ENCODE measurements at regions of chr2 and their contacts with region 1.

Region 1: DNA sequence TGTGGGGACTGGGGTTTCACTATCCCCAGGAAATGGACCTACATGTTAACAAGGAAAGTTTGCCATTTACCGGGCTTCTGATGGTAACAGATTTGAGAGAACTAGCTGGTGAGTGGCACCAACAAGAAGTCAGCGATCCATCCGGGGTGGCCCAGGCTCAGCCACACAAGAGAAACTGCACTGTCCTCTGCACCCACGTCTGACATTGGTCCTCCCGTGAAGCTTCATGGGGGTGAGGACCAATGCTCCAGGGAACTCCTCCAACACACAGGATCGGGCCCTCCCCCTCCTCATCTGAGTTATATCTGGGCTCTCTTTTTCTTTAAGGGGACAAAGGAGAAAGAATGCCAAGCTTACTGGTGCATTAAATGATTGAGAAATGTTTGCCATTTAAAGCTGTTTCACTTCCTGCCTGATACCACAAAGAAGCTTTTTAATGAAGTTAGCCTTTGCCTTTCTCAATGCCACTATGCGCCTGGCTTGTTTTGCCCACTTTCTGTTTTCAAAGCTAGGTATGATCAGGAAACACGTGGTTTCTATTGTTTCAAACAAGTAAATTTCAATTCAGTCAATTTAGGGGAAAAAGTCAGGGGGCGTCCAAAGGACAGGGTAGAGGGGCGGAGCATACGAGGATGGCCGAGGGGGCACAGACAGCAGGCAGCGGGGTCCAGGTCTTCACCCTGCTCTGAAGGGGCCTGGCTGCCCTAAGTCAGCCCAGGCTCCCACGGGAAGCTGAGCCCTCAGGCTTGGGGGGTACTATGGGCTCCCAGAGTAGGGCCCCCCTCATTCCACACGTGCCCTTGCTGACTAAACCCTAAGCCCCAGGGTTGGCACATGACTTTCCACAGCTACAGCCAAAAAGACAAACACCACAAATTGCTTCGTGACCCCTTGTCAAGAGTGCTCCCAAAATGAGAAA is 204.0 kb upstream of the ID2 start:
- DNase-seq: peak in 5 of 14 experiments; percentile 32 to 78 (median 63)
- ATAC-seq: peak; percentile 49
- H3K4me3 ChIP-seq: peak overlapping the region; percentile 41
- H3K4me3 Mint-ChIP-seq: peak overlapping the region; percentile 49
- H3K27ac ChIP-seq: peak overlapping the region; percentile 32 to 83
- H3K27ac Mint-ChIP-seq: peak overlapping the region; percentile 80
- H3K4me1 ChIP-seq: peaks cover 87% of the 10 kb centered on the region
- H3K4me1 Mint-ChIP-seq: peaks cover 76% of the 10 kb centered on the region
- H3K27me3 ChIP-seq: no peaks in the 10 kb centered on the region
- H3K27me3 Mint-ChIP-seq: no peaks in the 10 kb centered on the region
- CTCF ChIP-seq: no peak

Region 2: GRCh38 chr2:8488001-8488738 is 10.4 kb after region 1 on chr2:
- CTCF ChIA-PET with region 1: no interaction called
- POLR2A ChIA-PET with region 1: interaction called, 18 read pairs
- intact Hi-C with region 1: no loop called
- DNase-seq: peak in 13 of 14 experiments; percentile 19 to 94 (median 45)
- ATAC-seq: peak; percentile 85
- H3K4me3 ChIP-seq: peak overlapping the region; percentile 60
- H3K4me3 Mint-ChIP-seq: peak overlapping the region; percentile 77
- H3K27ac ChIP-seq: peak overlapping the region; percentile 80
- H3K27ac Mint-ChIP-seq: peak overlapping the region; percentile 89
- H3K4me1 ChIP-seq: peaks cover 54% of the 10 kb centered on the region
- H3K4me1 Mint-ChIP-seq: peaks cover 58% of the 10 kb centered on the region
- H3K27me3 ChIP-seq: no peaks in the 10 kb centered on the region
- H3K27me3 Mint-ChIP-seq: no peaks in the 10 kb centered on the region
- CTCF ChIP-seq: no peak

Region 3: DNA sequence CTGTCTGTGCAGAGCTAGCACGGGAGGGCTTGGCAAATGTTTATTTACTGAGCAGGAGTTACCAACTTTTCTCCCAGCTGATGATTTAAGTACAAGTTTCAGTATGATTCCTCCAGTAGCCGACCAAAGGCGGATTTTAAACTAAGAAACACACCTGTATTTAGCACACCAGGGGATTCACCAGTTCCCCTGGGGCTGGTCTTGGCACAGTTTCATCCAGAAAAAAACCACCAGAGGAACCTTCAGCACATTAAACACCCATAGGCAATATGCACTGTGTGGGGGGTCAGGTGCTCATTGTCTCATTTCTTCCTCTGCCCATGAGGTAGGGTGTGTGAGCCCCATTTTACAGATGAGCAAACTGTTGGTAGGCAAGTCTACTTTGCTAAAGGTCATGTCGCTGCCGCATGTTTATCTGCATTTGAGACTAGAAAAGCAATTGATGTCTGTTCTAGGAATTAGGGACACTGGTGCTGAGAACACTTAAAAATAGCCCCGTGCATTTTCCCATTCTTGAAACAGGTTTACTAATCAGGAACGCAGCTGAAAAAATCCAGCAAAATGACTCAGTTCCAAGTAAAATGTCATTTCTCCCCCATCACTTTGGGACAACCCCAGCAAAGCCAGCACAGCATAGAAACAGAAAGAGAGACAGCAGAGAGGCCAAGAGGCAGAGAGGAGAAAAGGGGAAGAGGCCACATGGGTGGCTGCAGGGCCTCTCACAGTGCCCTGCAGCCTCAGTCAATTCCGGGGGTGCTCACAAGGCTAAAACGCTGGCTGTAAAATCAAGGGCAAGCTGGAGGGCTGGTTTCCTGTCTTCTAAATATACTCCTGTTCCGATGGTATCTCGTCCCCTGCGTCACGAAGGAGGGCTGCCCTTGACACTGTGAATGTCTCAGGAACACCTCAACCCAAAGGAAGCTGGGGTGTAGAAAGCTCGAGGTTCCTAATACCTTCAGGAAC is 37.3 kb after region 1 on chr2:
- CTCF ChIA-PET with region 1: no interaction called
- POLR2A ChIA-PET with region 1: interaction called, 5 read pairs
- intact Hi-C with region 1: loop called in 1 of 2 experiments (anchors 5 kb)
- DNase-seq: peak; percentile 12 to 88 (median 30)
- ATAC-seq: peak; percentile 85
- H3K4me3 ChIP-seq: no peak overlapping the region
- H3K4me3 Mint-ChIP-seq: peak overlapping the region; percentile 59
- H3K27ac ChIP-seq: peak overlapping the region; percentile 1 to 75
- H3K27ac Mint-ChIP-seq: peak overlapping the region; percentile 81
- H3K4me1 ChIP-seq: peaks cover 46% of the 10 kb centered on the region
- H3K4me1 Mint-ChIP-seq: peaks cover 23% of the 10 kb centered on the region
- H3K27me3 ChIP-seq: no peaks in the 10 kb centered on the region
- H3K27me3 Mint-ChIP-seq: no peaks in the 10 kb centered on the region
- CTCF ChIP-seq: no peak

Region 4: DNA sequence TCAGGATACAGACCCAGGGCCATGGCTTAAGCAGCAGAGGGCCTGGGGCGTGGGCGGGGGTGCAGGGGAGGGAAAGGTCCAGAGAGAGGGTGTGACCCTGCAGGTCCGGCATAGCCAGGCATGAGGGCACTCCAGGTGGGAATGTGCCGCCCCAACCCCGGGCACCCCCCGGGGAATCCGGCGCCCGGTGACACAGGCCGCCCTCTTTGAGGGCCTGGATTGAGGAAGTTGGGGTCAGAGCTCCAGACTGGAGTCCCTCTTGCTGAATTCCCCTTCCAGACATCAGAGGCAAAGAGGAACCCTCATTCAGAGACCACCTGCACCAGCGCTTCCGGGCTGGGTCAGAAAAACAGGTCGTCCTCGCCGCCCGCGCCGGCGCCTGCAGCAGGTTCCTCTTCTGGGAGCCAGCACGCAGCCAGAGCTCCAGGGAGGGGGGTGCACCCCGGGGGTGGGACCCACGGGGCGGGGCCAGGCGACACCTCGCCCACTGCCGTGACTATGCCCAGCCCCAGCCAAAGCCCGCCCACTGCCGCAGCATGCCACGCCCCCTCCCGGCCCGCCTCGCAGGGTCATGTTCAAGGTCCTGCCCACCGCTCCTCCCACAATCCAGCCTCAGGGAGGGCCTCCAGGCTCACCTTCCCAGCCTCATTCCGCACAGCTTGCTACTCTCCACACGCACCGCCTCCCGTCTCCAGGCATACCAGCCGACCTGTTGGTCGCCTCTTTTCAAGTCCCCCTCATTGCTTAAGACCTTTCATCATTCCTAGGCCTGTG is 105.8 kb after region 1 on chr2:
- CTCF ChIA-PET with region 1: no interaction called
- POLR2A ChIA-PET with region 1: no interaction called
- intact Hi-C with region 1: no loop called
- DNase-seq: peak; percentile 31 to 84 (median 55)
- ATAC-seq: peak; percentile 81
- H3K4me3 ChIP-seq: no peak overlapping the region
- H3K4me3 Mint-ChIP-seq: peak overlapping the region; percentile 60
- H3K27ac ChIP-seq: no peak overlapping the region
- H3K27ac Mint-ChIP-seq: no peak overlapping the region
- H3K4me1 ChIP-seq: peaks cover 41% of the 10 kb centered on the region
- H3K4me1 Mint-ChIP-seq: peaks cover 19% of the 10 kb centered on the region
- H3K27me3 ChIP-seq: peaks cover 0 to 3% of the 10 kb centered on the region in 2 experiments
- H3K27me3 Mint-ChIP-seq: peaks cover 4% of the 10 kb centered on the region
- CTCF ChIP-seq: no peak

Measured in CD4-positive, alpha-beta T cell (primary cell).